ENCODE measurements at regions of chr2 and their contacts with region 1.

Region 1: GRCh38 chr2:105789745-105790460 is 45.2 kb downstream of the NCK2 start:
- DNase-seq: peak; percentile 55 to 75
- ATAC-seq: peak; percentile 97 to 98 (median 98)
- H3K4me3 ChIP-seq: peak overlapping the region; percentile 43
- H3K27ac ChIP-seq: peak overlapping the region; percentile 88
- H3K4me1 ChIP-seq: peaks cover 33% of the 10 kb centered on the region
- H3K27me3 ChIP-seq: no peaks in the 10 kb centered on the region
- CTCF ChIP-seq: no peak

Region 2: DNA sequence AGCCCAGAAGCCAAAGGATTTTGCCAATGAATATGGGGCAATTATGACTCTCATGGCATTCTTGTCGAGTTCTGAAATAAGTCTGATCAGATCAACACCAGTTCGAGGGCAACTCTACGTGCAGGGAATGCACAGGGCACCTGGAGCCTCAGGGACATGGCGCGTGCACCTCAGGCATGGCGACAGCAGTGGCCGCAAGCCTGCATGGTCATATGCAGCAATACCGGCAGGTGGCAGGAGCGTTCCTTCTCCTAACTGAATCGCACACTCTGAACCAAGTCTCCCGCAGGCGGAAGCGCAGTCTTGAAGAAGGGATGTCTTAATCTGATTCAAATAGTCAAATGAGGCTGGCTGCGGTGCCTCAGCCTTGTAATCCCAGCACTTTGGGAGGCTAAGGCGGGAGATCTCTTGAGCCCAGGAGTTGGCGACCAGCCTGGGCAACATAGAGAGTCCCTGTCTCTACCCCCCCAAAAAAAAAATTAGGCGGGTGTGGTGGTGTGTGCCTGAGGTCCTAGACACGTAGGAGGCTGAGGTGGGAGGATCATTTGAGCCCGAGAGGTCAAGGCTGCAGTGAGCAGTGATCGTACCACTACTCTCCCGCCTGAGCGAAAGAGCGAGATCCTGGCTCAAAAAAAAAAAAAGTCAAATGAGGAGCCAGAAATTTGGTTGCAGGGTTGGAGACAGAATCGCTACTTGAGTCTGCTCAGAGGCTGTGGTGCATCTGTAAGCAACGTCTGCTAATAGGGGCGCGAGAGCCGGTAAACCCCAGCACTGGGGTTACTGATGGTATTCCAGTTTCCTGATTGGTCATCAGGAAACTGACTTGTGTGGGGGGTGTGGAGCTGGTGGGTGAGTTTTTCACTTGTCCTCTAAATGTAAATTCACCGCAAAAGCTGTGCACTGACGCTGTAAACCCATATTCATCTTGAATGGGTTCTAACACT is 419.9 kb before region 1 on chr2:
- intact Hi-C with region 1: loop called in 1 of 2 experiments (anchors 10 kb)
- DNase-seq: peak; percentile 85 to 93
- ATAC-seq: peak; percentile 76 to 79 (median 78)
- H3K4me3 ChIP-seq: no peak overlapping the region
- H3K27ac ChIP-seq: no peak overlapping the region
- H3K4me1 ChIP-seq: peaks cover 22% of the 10 kb centered on the region
- H3K27me3 ChIP-seq: no peaks in the 10 kb centered on the region
- CTCF ChIP-seq: peak; percentile 92

Region 3: DNA sequence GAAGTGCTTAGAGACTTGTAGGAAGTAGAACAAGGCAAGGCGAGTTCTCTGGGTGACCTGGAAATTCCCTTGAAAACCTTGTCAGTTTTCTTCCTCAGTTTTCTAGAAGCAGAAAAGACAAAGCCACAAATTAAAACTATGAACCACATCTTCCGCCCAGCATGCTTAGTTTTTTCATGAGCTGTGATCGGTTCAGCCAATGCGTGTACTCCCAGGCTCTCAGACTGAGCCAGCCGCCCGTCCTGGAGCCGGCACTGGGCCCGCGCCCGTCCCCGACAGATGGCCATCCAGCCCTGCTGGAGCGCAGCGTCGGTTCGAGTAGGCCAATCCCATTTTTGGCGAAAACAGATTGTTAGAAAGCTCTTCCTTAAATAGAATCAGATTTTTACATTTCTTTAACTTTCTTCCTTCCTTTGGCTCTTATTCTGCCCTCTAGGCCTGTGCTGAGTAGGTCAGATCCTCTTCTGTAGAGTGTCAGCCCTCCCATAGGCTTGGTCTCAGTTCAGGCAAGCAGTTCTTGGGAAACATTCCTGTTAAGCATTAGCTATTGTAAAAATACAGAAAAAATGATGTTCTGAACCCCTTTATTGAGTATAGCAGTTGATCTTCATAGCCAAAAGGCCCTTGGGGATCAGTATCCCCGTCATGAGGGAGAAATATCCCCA is 67.3 kb after region 1 on chr2:
- intact Hi-C with region 1: no loop called
- DNase-seq: no peak
- ATAC-seq: peak; percentile 60 to 84 (median 76)
- H3K4me3 ChIP-seq: no peak overlapping the region
- H3K27ac ChIP-seq: peak overlapping the region; percentile 21
- H3K4me1 ChIP-seq: peaks cover 10% of the 10 kb centered on the region
- H3K27me3 ChIP-seq: no peaks in the 10 kb centered on the region
- CTCF ChIP-seq: no peak

Region 4: DNA sequence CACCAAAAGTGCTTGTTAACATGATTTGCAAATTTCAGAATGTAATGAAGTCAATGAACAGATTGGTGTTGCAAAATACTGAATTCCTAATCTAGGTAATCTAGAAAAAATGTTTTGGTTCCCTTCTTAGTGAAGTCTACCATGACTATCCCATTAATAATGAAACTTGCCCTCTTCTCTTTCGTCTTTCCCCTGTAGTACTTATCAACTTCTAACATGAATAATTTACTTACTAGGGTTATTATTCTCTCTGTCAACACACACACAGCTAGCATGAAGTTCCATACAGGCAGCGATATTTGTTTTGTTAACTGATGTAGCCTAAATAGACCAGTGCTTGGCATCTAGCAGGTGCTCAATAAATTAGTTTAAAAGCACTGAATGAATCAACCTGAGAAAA is 115.0 kb after region 1 on chr2:
- intact Hi-C with region 1: loop called in 1 of 2 experiments (anchors 5 kb)
- DNase-seq: no peak
- ATAC-seq: no peak
- H3K4me3 ChIP-seq: no peak overlapping the region
- H3K27ac ChIP-seq: peak overlapping the region; percentile 43
- H3K4me1 ChIP-seq: peaks cover 44% of the 10 kb centered on the region
- H3K27me3 ChIP-seq: no peaks in the 10 kb centered on the region
- CTCF ChIP-seq: no peak

Measured in psoas muscle (tissue), 8 donors.